Caco-2 (cell line): ENCODE measurements at regions of chrX and their contacts with region 1.

Region 1: GRCh38 chrX:12974796-12975669 is at the start of gene TMSB4X:
- DNase-seq: peak; percentile 83 to 85
- H3K4me3 ChIP-seq: peak within 1 kb of the TSS; percentile 67
- H3K4me3 Mint-ChIP-seq: peak within 1 kb of the TSS; percentile 97
- H3K27ac Mint-ChIP-seq: peak within 1 kb of the TSS; percentile 94
- H3K4me1 ChIP-seq: peaks cover 10% of the 10 kb centered on the region
- H3K4me1 Mint-ChIP-seq: peaks cover 10% of the 10 kb centered on the region
- H3K27me3 ChIP-seq: no peaks in the 10 kb centered on the region
- H3K27me3 Mint-ChIP-seq: no peaks in the 10 kb centered on the region
- CTCF ChIP-seq: no peak
- total RNA-seq, gene TMSB4X: 1,007 and 1,095 TPM in 2 replicates

Region 2: GRCh38 chrX:12988797-12989196 is 13.8 kb after region 1 on chrX:
- CTCF ChIA-PET with region 1: no interaction called
- POLR2A ChIA-PET with region 1: no interaction called
- intact Hi-C with region 1: loop called (anchors 2 kb)
- DNase-seq: peak; percentile 70 to 71
- H3K4me3 ChIP-seq: no peak overlapping the region
- H3K4me3 Mint-ChIP-seq: peak overlapping the region; percentile 57
- H3K27ac Mint-ChIP-seq: peak overlapping the region; percentile 47
- H3K4me1 ChIP-seq: peaks cover 27% of the 10 kb centered on the region
- H3K4me1 Mint-ChIP-seq: peaks cover 13% of the 10 kb centered on the region
- H3K27me3 ChIP-seq: no peaks in the 10 kb centered on the region
- H3K27me3 Mint-ChIP-seq: no peaks in the 10 kb centered on the region
- CTCF ChIP-seq: no peak

Region 3: DNA sequence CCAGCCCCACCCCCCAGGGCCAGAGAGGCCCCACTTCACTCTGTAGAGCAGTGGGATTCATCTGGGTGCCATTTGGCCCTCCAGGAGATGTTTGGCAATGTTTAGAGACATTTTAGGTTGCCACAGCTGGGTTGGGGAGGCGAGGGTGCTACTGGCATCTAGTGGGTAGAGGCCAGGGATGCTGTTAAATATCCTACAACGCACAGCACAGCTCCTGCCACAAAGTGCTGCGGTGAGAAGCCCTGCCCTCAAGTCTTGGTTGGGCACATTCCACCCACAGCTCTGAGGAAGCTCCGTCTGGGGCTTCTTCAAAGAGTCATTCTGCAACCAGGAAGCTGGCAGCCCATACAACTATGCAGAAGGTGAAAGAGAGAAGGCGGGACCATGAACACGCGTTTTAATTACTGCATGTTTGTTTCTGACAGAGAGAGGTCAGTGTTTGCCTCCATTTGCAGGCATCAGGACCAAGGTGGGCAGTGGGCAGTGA is 117.5 kb after region 1 on chrX:
- CTCF ChIA-PET with region 1: no interaction called
- POLR2A ChIA-PET with region 1: interaction called, 3 read pairs
- intact Hi-C with region 1: loop called (anchors 10 kb)
- DNase-seq: no peak
- H3K4me3 ChIP-seq: no peak overlapping the region
- H3K4me3 Mint-ChIP-seq: no peak overlapping the region
- H3K27ac Mint-ChIP-seq: no peak overlapping the region
- H3K4me1 ChIP-seq: no peaks in the 10 kb centered on the region
- H3K4me1 Mint-ChIP-seq: no peaks in the 10 kb centered on the region
- H3K27me3 ChIP-seq: no peaks in the 10 kb centered on the region
- H3K27me3 Mint-ChIP-seq: no peaks in the 10 kb centered on the region
- CTCF ChIP-seq: no peak

Region 4: DNA sequence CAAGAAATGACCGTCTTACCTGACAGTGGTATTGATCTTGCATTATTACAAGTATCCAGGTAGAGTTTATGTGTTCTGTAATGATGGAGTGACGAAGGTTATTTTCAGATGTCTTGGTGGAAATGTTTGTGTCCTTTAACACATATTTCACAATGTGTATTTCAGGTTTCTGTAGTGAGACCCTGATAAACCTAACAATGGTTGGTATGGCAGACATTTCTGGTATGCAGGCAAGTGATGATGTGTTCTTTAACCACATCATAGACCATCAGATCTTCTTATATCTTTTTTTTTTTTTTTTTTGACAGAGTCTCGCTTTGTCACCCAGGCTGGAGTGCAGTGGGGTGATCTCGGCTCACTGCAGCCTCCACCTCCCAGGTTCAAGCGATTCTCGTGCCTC is 359.5 kb after region 1 on chrX:
- CTCF ChIA-PET with region 1: no interaction called
- POLR2A ChIA-PET with region 1: no interaction called
- intact Hi-C with region 1: loop called (anchors 10 kb)
- DNase-seq: peak in 1 of 2 experiments; percentile 5
- H3K4me3 ChIP-seq: no peak overlapping the region
- H3K4me3 Mint-ChIP-seq: no peak overlapping the region
- H3K27ac Mint-ChIP-seq: peak overlapping the region; percentile 45
- H3K4me1 ChIP-seq: peaks cover 11% of the 10 kb centered on the region; the same call in 1 of the 2 replicates
- H3K4me1 Mint-ChIP-seq: no peaks in the 10 kb centered on the region
- H3K27me3 ChIP-seq: no peaks in the 10 kb centered on the region
- H3K27me3 Mint-ChIP-seq: no peaks in the 10 kb centered on the region
- CTCF ChIP-seq: no peak

Region 5: GRCh38 chrX:13646154-13646549 is 671.1 kb after region 1 on chrX:
- CTCF ChIA-PET with region 1: no interaction called
- POLR2A ChIA-PET with region 1: no interaction called
- intact Hi-C with region 1: loop called (anchors 5 kb)
- DNase-seq: peak; percentile 44 to 63
- H3K4me3 ChIP-seq: no peak overlapping the region
- H3K4me3 Mint-ChIP-seq: no peak overlapping the region
- H3K27ac Mint-ChIP-seq: no peak overlapping the region
- H3K4me1 ChIP-seq: no peaks in the 10 kb centered on the region
- H3K4me1 Mint-ChIP-seq: peaks cover 6% of the 10 kb centered on the region
- H3K27me3 ChIP-seq: no peaks in the 10 kb centered on the region
- H3K27me3 Mint-ChIP-seq: no peaks in the 10 kb centered on the region
- CTCF ChIP-seq: peak; percentile 48 to 61